Motor neuron (in vitro differentiated cells): ENCODE measurements at regions of chr1 and their contacts with region 1.

Region 1: GRCh38 chr1:52296345-52296744 is 69.7 kb downstream of the CC2D1B start:
- ATAC-seq: peak in 5 of 8 experiments; percentile 40 to 94 (median 90)
- H3K4me3 ChIP-seq: no peak overlapping the region
- H3K27ac ChIP-seq: no peak overlapping the region
- H3K4me1 ChIP-seq: no peaks in the 10 kb centered on the region

Region 2: DNA sequence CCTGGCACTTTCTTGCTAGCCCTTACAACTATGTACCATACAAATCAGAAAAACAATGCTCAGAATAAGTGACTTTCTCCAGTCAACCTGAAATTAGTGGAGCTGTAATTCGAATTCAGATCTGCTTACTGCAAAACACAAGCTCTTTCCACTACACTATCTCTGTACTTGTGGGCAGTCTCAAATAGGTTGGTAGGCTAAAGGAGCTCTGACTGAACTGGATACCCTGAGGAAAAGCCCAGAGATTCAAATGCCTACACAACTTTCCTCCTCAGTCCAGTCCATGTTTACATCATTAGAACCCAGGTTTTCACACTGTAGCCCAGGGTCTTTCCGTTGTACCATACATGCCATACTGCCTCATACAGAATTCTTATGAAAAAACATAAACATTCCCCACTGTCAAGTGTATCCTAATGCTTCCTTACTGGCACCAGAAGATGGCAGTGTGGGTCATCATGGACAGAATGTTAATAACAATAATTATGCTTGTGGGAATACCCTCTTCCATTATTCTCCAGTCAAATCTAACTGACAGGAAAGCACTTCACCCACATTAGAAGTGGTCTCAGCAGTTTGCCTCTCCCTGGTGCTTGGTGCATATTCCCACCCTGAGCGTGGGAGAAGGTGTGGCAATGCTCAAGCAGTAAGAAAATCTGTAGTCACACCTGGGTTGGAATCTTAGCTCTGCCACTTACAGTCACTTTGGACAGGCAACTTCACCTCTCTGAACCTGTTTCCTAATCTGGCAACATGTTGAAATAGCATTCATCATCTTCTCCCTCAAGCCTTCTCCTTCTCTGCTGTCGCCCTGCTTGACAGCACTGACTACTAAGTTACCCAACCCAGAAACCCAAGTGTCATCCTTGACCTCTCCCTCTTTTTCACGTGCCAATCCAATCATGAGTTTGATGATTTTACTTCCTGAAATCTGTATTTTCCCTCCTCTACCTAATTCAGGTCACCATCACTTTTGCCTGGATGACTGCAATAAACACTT is 168.9 kb before region 1 on chr1:
- in situ Hi-C with region 1: loop called in 3 of 9 experiments (anchors 10 to 25 kb)
- ATAC-seq: peak; percentile 84 to 98 (median 91)
- H3K4me3 ChIP-seq: no peak overlapping the region
- H3K27ac ChIP-seq: no peak overlapping the region
- H3K4me1 ChIP-seq: peaks cover 0 to 4% of the 10 kb centered on the region in 2 donors

Region 3: DNA sequence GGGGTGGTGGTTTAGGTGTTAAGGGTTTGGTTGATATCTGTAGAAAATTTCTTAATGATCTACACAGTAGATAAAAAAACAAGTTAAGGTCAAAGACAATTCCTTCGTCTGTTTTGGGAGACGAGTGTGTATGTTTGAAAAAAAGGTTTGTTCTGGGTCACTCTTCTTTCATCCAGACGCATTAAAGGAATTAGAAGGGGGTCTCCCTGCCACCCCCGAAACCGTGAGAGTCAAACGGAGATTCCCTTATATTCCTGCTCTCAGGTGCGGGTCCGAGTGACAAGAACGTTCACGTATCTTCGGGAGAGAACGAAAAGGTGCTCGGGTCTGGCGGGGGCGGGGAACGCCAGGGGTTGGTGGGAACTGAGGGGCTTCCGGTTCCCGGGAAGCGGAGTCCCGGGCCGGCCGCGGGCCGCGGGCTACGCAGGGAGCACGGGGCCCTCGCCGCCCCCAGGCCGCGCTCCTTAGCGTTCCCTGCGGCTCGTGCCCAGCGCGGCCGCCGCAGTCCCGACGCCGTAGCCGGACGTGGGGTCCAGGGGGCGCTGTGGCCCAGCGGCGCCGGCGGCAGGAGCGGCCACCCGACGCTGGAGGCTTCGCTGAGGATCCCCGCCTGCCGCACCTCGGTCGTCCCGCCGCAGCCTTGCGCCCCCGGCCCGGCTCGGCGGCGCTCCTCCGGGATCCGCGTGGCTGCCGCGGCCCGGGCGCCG is 154.7 kb before region 1 on chr1 and contains the start of gene ZFYVE9:
- in situ Hi-C with region 1: loop called in 2 of 9 experiments (anchors 25 kb)
- ATAC-seq: peak; percentile 85 to 93 (median 91)
- H3K4me3 ChIP-seq: peak within 1 kb of the TSS; percentile 82 to 98 (median 93)
- H3K27ac ChIP-seq: peak within 1 kb of the TSS; percentile 90 to 95
- H3K4me1 ChIP-seq: peaks cover 7 to 35% of the 10 kb centered on the region in 2 donors
- total RNA-seq, gene ZFYVE9: 13.8 to 45.4 (median 33.5) TPM

Region 4: DNA sequence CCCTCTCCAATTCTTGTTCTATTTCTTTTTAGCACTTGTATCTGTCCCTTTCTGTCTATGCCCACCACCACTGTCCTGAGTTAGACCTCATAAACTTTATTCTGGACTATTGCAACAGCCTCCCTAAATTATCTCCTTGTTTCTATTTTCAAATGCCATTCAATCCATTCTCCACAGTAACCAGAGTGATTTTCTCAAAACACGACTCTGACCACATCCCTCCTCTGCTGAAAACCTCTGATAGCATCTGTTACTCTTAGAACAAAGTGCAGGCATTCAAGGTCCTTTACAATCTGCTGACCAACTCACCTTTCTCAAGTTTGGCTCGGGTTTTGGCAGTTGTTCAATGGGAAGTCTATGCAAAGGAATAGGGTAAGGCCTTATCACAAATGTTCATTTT is 283.1 kb after region 1 on chr1:
- in situ Hi-C with region 1: no loop called
- ATAC-seq: no peak
- H3K4me3 ChIP-seq: no peak overlapping the region
- H3K27ac ChIP-seq: no peak overlapping the region
- H3K4me1 ChIP-seq: no peaks in the 10 kb centered on the region